Activated CD4-positive, alpha-beta T cell treated with anti-CD3 and anti-CD28 coated beads, Interleukin-2, amount 10 ng/mL, durations not matched to agents 24 days and 14 days (primary cell): ENCODE measurements at regions of chr3 and their contacts with region 1.

Region 1: DNA sequence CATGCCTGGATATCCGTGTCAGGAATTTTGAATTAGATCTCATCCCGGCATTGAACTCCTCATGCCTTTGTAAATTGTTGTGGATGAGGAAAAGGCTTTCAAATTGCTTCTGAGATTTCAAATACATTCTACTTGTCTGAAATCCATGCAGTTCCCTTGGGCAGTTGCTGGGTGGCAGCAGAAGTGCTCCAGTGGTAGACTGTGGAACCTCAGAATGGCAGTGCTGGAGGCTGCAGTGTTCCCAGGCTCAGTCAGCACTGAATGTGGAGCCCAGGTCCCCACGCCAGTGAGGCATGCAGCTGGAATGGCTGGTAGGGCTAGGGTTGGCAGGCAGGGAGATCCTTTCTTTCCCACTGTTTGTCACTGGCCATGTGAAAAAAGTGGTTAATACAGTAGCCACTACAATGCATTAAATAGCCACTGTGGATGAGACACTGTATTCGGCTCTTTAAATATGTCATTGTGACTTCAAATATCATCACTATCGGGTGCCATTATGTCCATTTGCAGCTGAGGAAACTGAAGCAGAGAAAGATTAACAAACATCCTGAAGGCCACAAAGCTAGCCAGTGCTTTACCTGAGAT is 98.6 kb downstream of the TPRG1 start:
- DNase-seq: peak; percentile 83
- H3K4me3 Mint-ChIP-seq: no peak overlapping the region
- H3K27ac Mint-ChIP-seq: no peak overlapping the region
- H3K4me1 Mint-ChIP-seq: peaks cover 18% of the 10 kb centered on the region
- H3K27me3 Mint-ChIP-seq: peaks cover 2% of the 10 kb centered on the region

Region 2: DNA sequence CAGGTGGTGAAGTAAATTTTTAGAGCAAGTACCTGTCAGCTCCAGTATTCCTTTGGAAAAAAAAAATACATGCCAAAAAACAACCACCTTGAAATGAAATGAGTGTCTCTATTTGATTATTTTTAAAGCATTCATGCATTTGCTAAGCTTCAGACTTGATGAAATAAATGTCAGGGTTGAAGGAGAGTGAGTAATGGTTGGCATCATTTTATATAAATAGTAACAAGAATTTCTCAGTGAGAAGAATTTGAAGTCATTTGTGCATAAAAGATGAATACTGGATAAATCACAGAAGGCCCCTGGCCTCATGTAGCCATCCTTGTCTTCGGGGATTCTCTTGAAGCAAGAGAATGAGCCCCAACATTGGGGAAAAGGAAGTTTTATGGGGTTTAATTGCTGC is 798.0 kb before region 1 on chr3:
- intact Hi-C with region 1: no loop called
- DNase-seq: no peak
- H3K4me3 Mint-ChIP-seq: no peak overlapping the region
- H3K27ac Mint-ChIP-seq: no peak overlapping the region
- H3K4me1 Mint-ChIP-seq: no peaks in the 10 kb centered on the region
- H3K27me3 Mint-ChIP-seq: no peaks in the 10 kb centered on the region

Region 3: DNA sequence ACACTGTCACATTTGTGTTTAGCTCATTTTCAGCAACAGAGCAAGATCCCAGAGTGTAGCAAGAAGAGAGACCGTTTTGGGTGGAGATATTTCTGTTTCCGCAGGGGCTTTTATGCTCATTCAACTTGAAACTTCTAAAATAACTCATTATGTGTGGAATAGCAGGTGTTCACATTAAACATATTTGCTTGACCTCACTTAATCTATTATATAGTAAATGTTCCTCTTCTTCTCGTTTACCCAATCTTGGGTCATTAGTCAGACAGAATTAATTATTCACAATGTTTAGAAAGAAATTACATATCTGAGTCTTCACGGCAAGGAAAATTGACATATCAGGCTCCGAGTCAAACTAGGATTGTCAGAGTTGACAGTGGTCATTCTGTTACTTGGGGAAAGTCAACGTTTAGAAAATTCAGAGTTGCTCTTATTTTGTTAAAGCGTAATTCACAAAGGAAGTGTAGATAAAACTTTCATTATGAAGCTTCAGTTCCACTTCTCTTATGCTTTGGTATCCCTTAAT is 124.3 kb after region 1 on chr3:
- intact Hi-C with region 1: loop called (anchors 10 kb)
- DNase-seq: no peak
- H3K4me3 Mint-ChIP-seq: peak overlapping the region; percentile 13
- H3K27ac Mint-ChIP-seq: peak overlapping the region; percentile 48
- H3K4me1 Mint-ChIP-seq: peaks cover 17% of the 10 kb centered on the region
- H3K27me3 Mint-ChIP-seq: no peaks in the 10 kb centered on the region

Region 4: DNA sequence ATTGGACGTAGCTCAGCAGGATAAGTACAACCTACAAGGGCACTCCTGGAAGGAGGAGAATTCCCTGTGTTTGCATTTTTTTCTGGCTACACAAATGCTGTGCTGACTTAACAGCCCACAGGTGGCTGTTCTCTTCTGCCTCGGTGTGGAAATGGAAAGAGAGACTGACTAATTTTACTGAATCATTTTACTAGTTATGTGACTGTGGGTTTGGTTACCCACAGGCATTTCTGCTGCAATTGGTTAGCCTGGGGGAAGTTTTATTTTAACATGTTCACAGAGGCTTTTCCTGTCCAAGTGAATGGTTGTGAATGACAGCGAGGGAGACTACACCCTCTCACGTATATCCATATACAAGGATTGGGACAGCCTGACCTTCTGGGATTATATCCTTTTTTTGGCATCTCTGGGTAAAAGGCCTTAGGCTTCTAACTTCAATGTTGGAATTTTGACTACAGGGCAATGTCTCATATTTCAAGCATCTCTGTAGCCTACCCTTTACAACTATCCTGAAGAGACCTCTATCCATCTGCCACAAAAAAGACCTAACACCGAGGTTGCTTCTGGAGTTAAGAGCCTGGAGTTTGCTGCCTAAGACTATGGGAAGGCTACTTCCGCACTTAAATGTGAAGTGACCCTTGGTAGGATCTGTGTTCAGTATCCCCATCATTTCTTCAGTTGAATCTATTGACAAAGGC is 293.7 kb after region 1 on chr3:
- intact Hi-C with region 1: loop called (anchors 10 kb)
- DNase-seq: peak; percentile 84
- H3K4me3 Mint-ChIP-seq: peak overlapping the region; percentile 3
- H3K27ac Mint-ChIP-seq: peak overlapping the region; percentile 31
- H3K4me1 Mint-ChIP-seq: peaks cover 30% of the 10 kb centered on the region
- H3K27me3 Mint-ChIP-seq: no peaks in the 10 kb centered on the region

Region 5: DNA sequence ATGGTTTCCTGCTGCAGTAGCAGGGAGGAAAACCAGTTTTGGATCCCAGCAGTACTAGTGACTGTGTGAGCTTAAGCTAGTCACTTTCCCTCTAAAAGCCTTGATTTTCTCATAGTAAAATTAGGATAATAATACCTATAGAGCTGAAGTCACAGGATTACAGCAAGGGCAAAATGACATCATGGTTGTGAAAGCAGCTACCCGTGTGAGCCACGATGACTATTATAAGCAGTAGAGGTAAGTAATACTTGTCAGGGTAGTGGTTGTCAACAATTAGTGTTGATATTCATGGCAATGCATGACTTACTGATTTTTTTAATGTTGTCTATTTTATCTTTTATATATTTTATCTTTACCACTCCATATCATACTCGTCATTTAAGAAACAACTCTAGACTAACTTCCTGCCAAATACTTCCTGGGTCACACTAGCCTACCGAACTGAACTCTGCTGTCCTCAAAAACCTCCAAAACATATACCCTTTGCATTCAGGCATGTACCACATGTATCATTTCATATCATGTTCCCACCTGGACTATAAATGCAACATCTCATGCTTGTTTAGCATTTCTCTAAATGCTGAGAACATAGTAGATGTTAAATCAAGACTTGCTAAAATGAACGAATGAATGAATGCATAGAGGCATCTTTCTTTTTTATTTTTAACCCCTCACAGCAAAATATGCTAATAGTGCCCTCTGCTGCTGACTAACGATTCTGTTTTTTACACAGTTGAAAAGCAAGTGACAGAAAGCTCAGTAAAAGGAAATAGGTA is 677.8 kb after region 1 on chr3:
- intact Hi-C with region 1: loop called (anchors 1 kb)
- DNase-seq: peak; percentile 75
- H3K4me3 Mint-ChIP-seq: peak overlapping the region; percentile 24
- H3K27ac Mint-ChIP-seq: peak overlapping the region; percentile 38
- H3K4me1 Mint-ChIP-seq: peaks cover 3% of the 10 kb centered on the region
- H3K27me3 Mint-ChIP-seq: peaks cover 5% of the 10 kb centered on the region